GM12878 (cell line): ENCODE measurements at regions of chr9 and their contacts with region 1.

Region 1: GRCh38 chr9:106286249-106286648 is 576.7 kb upstream of the ZNF462 start:
- DNase-seq: no peak
- ATAC-seq: peak; percentile 87
- H3K4me3 ChIP-seq: no peak overlapping the region
- H3K27ac ChIP-seq: no peak overlapping the region
- H3K4me1 ChIP-seq: no peaks in the 10 kb centered on the region
- H3K27me3 ChIP-seq: no peaks in the 10 kb centered on the region
- CTCF ChIP-seq: peak in 2 of 3 experiments; percentile 41 to 45; a peak in 4 of 6 replicates
- EP300 ChIP-seq: no peak
- POLR2A ChIP-seq: no peak
- RAD21 ChIP-seq: no peak

Region 2: DNA sequence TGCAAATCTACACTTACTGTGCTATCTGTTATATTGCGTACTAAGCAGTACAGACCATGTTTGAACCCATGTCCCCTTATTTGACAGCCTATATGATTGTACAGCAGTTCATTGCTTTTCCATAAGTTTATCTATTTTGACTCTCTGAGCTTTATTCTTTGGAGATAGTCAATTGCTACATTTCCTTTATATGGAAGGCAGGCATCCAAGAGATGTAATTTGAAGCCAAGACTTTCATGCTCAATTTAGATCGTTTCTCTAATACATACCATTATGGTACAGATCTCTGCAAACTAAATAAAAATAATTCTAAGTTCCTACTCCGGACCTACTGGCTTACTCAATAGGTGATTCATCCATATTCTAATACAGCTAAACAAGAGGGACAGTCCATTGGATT is 167.1 kb before region 1 on chr9:
- CTCF ChIA-PET with region 1: no interaction called
- POLR2A ChIA-PET with region 1: no interaction called
- RAD21 ChIA-PET with region 1: no interaction called
- SMC1A ChIA-PET with region 1: no interaction called
- in situ Hi-C with region 1: no loop called
- intact Hi-C with region 1: no loop called
- DNase-seq: no peak
- ATAC-seq: no peak
- H3K4me3 ChIP-seq: no peak overlapping the region
- H3K27ac ChIP-seq: no peak overlapping the region
- H3K4me1 ChIP-seq: no peaks in the 10 kb centered on the region
- H3K27me3 ChIP-seq: no peaks in the 10 kb centered on the region
- CTCF ChIP-seq: no peak
- EP300 ChIP-seq: no peak
- POLR2A ChIP-seq: no peak
- RAD21 ChIP-seq: no peak

Region 3: DNA sequence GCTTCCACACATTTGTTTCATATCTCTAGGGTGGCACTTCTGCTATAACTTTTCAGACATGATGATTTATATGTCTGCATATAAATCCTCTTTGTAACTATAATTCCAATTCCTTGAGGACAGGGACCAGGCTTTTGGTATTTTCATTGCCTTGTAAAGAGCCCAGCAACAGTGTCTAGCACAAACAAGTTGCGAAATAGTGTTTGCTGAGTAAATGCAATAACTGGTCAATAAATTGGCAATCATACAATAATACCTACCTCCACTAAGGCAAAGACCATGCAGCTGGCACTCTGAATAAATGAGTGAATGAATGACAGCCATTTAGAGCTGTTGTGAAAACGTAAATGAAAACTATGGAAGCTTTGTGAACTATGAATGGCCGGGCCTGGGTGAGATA is 12.7 kb after region 1 on chr9:
- CTCF ChIA-PET with region 1: interaction called, 11 read pairs
- POLR2A ChIA-PET with region 1: no interaction called
- RAD21 ChIA-PET with region 1: interaction called, 3 read pairs
- SMC1A ChIA-PET with region 1: interaction called, 15 read pairs
- in situ Hi-C with region 1: no loop called
- intact Hi-C with region 1: no loop called
- DNase-seq: no peak
- ATAC-seq: no peak
- H3K4me3 ChIP-seq: no peak overlapping the region
- H3K27ac ChIP-seq: no peak overlapping the region
- H3K4me1 ChIP-seq: no peaks in the 10 kb centered on the region
- H3K27me3 ChIP-seq: no peaks in the 10 kb centered on the region
- CTCF ChIP-seq: no peak
- EP300 ChIP-seq: no peak
- POLR2A ChIP-seq: no peak
- RAD21 ChIP-seq: no peak

Region 4: GRCh38 chr9:106310782-106311181 is 24.5 kb after region 1 on chr9:
- CTCF ChIA-PET with region 1: interaction called, 10 read pairs
- POLR2A ChIA-PET with region 1: no interaction called
- RAD21 ChIA-PET with region 1: interaction called, 8 read pairs
- SMC1A ChIA-PET with region 1: interaction called, 16 read pairs
- in situ Hi-C with region 1: no loop called
- intact Hi-C with region 1: no loop called
- DNase-seq: peak; percentile 31
- ATAC-seq: peak; percentile 72
- H3K4me3 ChIP-seq: no peak overlapping the region
- H3K27ac ChIP-seq: no peak overlapping the region
- H3K4me1 ChIP-seq: no peaks in the 10 kb centered on the region
- H3K27me3 ChIP-seq: no peaks in the 10 kb centered on the region
- CTCF ChIP-seq: no peak
- EP300 ChIP-seq: peak; percentile 62 to 72; a peak in 2 of 4 replicates
- POLR2A ChIP-seq: no peak
- RAD21 ChIP-seq: no peak

Region 5: DNA sequence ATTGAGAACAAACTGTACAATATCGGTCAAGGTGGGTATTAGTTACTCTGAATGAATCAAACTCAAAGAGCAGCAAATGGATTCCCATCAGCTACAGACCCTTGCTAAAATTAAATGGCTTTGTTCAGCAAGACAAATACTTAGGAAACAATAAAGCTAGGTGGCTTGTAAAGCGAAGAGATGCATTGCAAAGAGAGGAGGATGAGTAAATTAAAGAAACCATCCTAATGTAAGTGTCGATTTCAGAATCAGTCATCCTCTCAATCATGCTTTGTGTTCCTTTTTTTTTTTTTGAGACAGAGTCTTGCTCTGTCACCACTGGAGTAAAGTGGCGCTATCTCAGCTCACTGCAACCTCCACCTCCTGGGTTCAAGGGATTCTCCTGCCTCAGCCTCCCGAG is 217.5 kb after region 1 on chr9:
- CTCF ChIA-PET with region 1: interaction called, 4 read pairs
- POLR2A ChIA-PET with region 1: no interaction called
- RAD21 ChIA-PET with region 1: interaction called, 10 read pairs
- SMC1A ChIA-PET with region 1: interaction called, 16 read pairs
- in situ Hi-C with region 1: no loop called
- intact Hi-C with region 1: no loop called
- DNase-seq: peak; percentile 28
- ATAC-seq: peak; percentile 85
- H3K4me3 ChIP-seq: no peak overlapping the region
- H3K27ac ChIP-seq: no peak overlapping the region
- H3K4me1 ChIP-seq: no peaks in the 10 kb centered on the region
- H3K27me3 ChIP-seq: no peaks in the 10 kb centered on the region
- CTCF ChIP-seq: peak in 2 of 3 experiments; percentile 11 to 12; a peak in 2 of 6 replicates
- EP300 ChIP-seq: peak in 1 of 2 experiments; percentile 87; a peak in 2 of 4 replicates
- POLR2A ChIP-seq: no peak
- RAD21 ChIP-seq: no peak